Calu3 (cell line): ENCODE measurements at regions of chr12 and their contacts with region 1.

Region 1: GRCh38 chr12:67161322-67161918 is 107.7 kb upstream of the CAND1 start:
- DNase-seq: peak; percentile 59
- H3K4me3 Mint-ChIP-seq: no peak overlapping the region
- H3K27ac Mint-ChIP-seq: no peak overlapping the region
- H3K4me1 Mint-ChIP-seq: no peaks in the 10 kb centered on the region
- H3K27me3 Mint-ChIP-seq: peaks cover 31% of the 10 kb centered on the region
- CTCF ChIP-seq: peak; percentile 47

Region 2: DNA sequence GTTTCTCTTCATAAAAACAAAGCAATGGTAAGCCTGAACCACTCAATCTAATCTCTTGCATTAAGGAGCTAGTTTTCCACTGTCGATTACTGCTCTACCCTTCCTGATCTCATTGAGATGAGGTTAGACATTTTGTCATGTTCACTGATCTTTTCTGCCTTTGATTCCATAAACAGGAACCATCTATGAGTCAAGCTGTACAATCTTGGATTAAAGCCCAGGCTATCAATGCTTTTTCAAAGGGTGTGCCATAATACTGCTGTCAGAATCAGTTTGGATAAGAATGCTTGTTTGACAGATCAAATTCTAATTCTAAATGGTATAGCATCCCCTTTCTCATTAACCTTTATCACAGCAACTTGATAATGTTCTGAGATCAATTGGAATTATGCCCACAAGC is 498.7 kb before region 1 on chr12:
- CTCF ChIA-PET with region 1: interaction called, 13 read pairs
- intact Hi-C with region 1: no loop called
- DNase-seq: no peak
- H3K4me3 Mint-ChIP-seq: peak overlapping the region; percentile 0
- H3K27ac Mint-ChIP-seq: peak overlapping the region; percentile 24
- H3K4me1 Mint-ChIP-seq: peaks cover 38% of the 10 kb centered on the region
- H3K27me3 Mint-ChIP-seq: no peaks in the 10 kb centered on the region
- CTCF ChIP-seq: no peak

Region 3: GRCh38 chr12:67268896-67269631 is 107.6 kb after region 1 on chr12 and contains the start of gene CAND1:
- CTCF ChIA-PET with region 1: interaction called, 12 read pairs
- intact Hi-C with region 1: no loop called
- DNase-seq: peak; percentile 96
- H3K4me3 Mint-ChIP-seq: peak within 1 kb of the TSS; percentile 75
- H3K27ac Mint-ChIP-seq: peak within 1 kb of the TSS; percentile 99
- H3K4me1 Mint-ChIP-seq: peaks cover 3% of the 10 kb centered on the region
- H3K27me3 Mint-ChIP-seq: no peaks in the 10 kb centered on the region
- CTCF ChIP-seq: no peak
- total RNA-seq, gene CAND1: 182 and 197 TPM in 2 replicates